ENCODE measurements at regions of chr10 and their contacts with region 1.

Region 1: DNA sequence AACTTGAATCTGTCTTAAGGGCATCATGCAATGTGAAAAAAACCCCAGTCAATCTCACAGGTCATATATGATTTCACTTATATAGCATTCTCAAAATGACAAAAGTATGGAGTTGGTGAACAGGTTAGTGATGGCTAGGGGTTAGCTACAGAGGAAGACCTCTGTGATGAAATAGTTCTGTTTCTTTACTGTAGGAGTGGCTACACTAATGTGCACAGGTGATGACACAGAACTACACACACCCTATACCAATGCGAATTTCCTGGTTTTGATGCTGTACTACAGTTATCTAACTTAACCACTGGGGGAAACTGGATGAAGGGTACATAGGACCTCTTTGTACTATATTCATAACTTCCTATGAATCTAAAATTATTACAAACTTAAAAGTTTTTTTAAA is 541.8 kb downstream of the PARD3 start:
- DNase-seq: no peak
- ATAC-seq: no peak
- H3K4me3 ChIP-seq: no peak overlapping the region
- H3K27ac ChIP-seq: no peak overlapping the region
- H3K4me1 ChIP-seq: no peaks in the 10 kb centered on the region
- H3K27me3 ChIP-seq: no peaks in the 10 kb centered on the region
- CTCF ChIP-seq: no peak
- POLR2A ChIP-seq: no peak

Region 2: GRCh38 chr10:33570495-33570894 is 702.8 kb before region 1 on chr10:
- intact Hi-C with region 1: loop called in 1 of 10 experiments (anchors 5 kb)
- DNase-seq: peak in 1 of 5 donors; percentile 18
- ATAC-seq: peak in 3 of 4 donors; percentile 67 to 79 (median 70)
- H3K4me3 ChIP-seq: no peak overlapping the region
- H3K27ac ChIP-seq: peak overlapping the region in 1 of 12 donors; percentile 85
- H3K4me1 ChIP-seq: peaks cover 0 to 29% (median 0%) of the 10 kb centered on the region in 12 donors
- H3K27me3 ChIP-seq: no peaks in the 10 kb centered on the region
- CTCF ChIP-seq: no peak
- POLR2A ChIP-seq: no peak

Region 3: GRCh38 chr10:34102237-34102673 is 171.1 kb before region 1 on chr10:
- intact Hi-C with region 1: no loop called
- DNase-seq: peak; percentile 77 to 89 (median 80)
- ATAC-seq: peak; percentile 82 to 96 (median 94)
- H3K4me3 ChIP-seq: no peak overlapping the region
- H3K27ac ChIP-seq: peak overlapping the region in 9 of 12 donors; percentile 24 to 82 (median 65)
- H3K4me1 ChIP-seq: peaks cover 0 to 26% (median 0%) of the 10 kb centered on the region in 12 donors
- H3K27me3 ChIP-seq: no peaks in the 10 kb centered on the region
- CTCF ChIP-seq: no peak
- POLR2A ChIP-seq: no peak